Activated CD4-positive, alpha-beta T cell treated with anti-CD3 and anti-CD28 coated beads, Interleukin-2, amount 10 ng/mL, durations not matched to agents 24 days and 14 days (primary cell): ENCODE measurements at regions of chr1 and their contacts with region 1.

Region 1: GRCh38 chr1:45455162-45455561 is 35.8 kb downstream of the TESK2 start:
- DNase-seq: no peak
- H3K4me3 Mint-ChIP-seq: no peak overlapping the region
- H3K27ac Mint-ChIP-seq: no peak overlapping the region
- H3K4me1 Mint-ChIP-seq: no peaks in the 10 kb centered on the region
- H3K27me3 Mint-ChIP-seq: no peaks in the 10 kb centered on the region

Region 2: GRCh38 chr1:45393718-45394302 is 61.4 kb before region 1 on chr1:
- intact Hi-C with region 1: loop called (anchors 10 kb)
- DNase-seq: no peak
- H3K4me3 Mint-ChIP-seq: no peak overlapping the region
- H3K27ac Mint-ChIP-seq: peak overlapping the region; percentile 29
- H3K4me1 Mint-ChIP-seq: peaks cover 4% of the 10 kb centered on the region
- H3K27me3 Mint-ChIP-seq: no peaks in the 10 kb centered on the region